Activated naive CD4-positive, alpha-beta T cell treated with anti-CD3 and anti-CD28 coated beads for 36 hours (primary cell): ENCODE measurements at regions of chr9 and their contacts with region 1.

Region 1: DNA sequence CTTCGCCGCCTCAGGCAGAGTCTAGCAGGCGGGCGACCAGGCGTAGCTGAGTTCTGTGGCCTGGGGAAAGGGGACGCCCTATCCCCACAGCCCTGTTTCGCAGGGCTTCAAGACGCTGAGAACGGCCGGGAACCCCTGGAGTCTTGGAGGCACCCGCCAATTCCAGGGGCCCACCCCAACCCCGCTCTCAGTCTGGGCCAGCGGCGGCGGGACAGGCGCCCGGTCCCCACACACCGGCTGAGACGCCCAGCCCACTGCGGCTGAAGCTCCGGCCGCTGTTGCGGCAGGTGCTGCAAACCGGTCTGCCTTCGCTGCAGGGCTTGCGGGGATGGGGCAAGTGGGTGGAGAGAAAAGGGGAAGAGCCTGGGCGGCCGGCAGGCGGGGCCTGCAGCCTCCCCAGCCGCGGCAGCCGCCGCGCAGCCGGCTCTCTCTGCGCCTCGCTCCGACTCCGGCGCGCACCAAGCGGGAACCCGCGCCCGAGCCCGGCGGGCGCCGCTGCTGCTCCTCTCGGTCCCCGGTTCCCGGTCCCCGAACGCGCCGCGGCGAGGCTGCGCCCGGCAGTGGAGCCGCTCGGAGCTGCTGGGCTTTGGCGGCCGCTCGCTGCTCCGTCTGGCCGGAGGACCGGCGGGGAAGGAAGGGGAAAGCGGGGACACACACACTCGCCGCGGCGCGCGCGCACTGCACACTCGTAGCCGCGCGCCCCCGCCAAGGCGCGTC is at the start of gene PIP5K1B:
- DNase-seq: peak; percentile 62
- H3K4me3 Mint-ChIP-seq: peak within 1 kb of the TSS; percentile 82
- H3K27ac Mint-ChIP-seq: no peak within 1 kb of the TSS
- H3K4me1 Mint-ChIP-seq: peaks cover 17% of the 10 kb centered on the region
- H3K27me3 Mint-ChIP-seq: peaks cover 68% of the 10 kb centered on the region
- total RNA-seq, gene PIP5K1B: 0.38 to 0.42 TPM

Region 2: GRCh38 chr9:69027355-69028096 is 322.6 kb after region 1 on chr9:
- CTCF ChIA-PET with region 1: no interaction called
- intact Hi-C with region 1: loop called (anchors 1 kb)
- DNase-seq: peak; percentile 65
- H3K4me3 Mint-ChIP-seq: no peak overlapping the region
- H3K27ac Mint-ChIP-seq: no peak overlapping the region
- H3K4me1 Mint-ChIP-seq: peaks cover 36% of the 10 kb centered on the region
- H3K27me3 Mint-ChIP-seq: no peaks in the 10 kb centered on the region

Region 3: GRCh38 chr9:70668751-70669150 is 1963.8 kb after region 1 on chr9:
- CTCF ChIA-PET with region 1: no interaction called
- intact Hi-C with region 1: no loop called
- DNase-seq: no peak
- H3K4me3 Mint-ChIP-seq: no peak overlapping the region
- H3K27ac Mint-ChIP-seq: no peak overlapping the region
- H3K4me1 Mint-ChIP-seq: peaks cover 8% of the 10 kb centered on the region
- H3K27me3 Mint-ChIP-seq: peaks cover 2% of the 10 kb centered on the region